Adrenal gland (tissue), 19 donors: ENCODE measurements at regions of chr1 and their contacts with region 1.

Region 1: GRCh38 chr1:56578963-56579875 is at the start of gene PLPP3:
- DNase-seq: peak; percentile 80 to 92 (median 89)
- H3K4me3 ChIP-seq: peak within 1 kb of the TSS; percentile 64 to 99 (median 83)
- H3K27ac ChIP-seq: peak within 1 kb of the TSS; percentile 35 to 93 (median 91)
- H3K4me1 ChIP-seq: peaks cover 10 to 29% of the 10 kb centered on the region in 2 donors
- H3K27me3 ChIP-seq: no peaks in the 10 kb centered on the region
- CTCF ChIP-seq: peak; percentile 24 to 80 (median 51)
- POLR2A ChIP-seq: peak; percentile 87 to 94
- total RNA-seq, gene PLPP3: 57.3 to 156 (median 100) TPM

Region 2: DNA sequence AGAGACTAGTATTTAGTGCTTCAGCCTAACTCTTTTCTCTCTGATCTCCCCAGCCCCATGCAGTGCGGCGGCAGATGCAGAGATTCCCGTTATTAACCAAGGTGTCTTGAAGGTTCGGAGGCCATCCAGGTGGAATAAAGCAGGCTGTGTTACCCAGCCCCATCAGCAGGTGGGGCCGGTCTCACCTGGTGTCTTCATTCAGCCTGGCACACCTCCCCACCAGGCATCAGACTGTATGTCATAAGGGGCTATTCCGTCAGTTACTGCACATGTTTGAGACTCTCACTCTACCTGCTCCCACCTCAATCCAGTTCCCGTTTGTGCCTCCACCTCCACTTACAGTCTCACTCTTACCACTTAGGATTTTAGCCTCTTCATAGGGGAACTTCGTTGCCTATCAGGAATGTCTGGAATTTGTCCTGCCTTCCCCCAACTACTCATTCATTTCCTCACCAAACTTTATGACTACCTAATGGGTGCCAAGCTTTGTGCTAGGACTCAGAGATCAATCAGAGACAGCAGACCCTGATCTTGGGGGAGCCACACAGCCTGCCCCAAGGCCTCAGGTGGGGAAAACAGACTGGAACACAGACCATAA is 170.0 kb before region 1 on chr1:
- intact Hi-C with region 1: loop called in 1 of 2 experiments (anchors 5 kb)
- DNase-seq: peak in 1 of 7 donors; percentile 19
- H3K4me3 ChIP-seq: no peak overlapping the region
- H3K27ac ChIP-seq: no peak overlapping the region
- H3K4me1 ChIP-seq: no peaks in the 10 kb centered on the region
- H3K27me3 ChIP-seq: no peaks in the 10 kb centered on the region
- CTCF ChIP-seq: peak in 3 of 6 experiments; percentile 26 to 33 (median 30)
- POLR2A ChIP-seq: no peak

Region 3: GRCh38 chr1:56516539-56517252 is 62.5 kb before region 1 on chr1:
- intact Hi-C with region 1: no loop called
- DNase-seq: no peak
- H3K4me3 ChIP-seq: no peak overlapping the region
- H3K27ac ChIP-seq: peak overlapping the region in 1 of 5 donors; percentile 19
- H3K4me1 ChIP-seq: peaks cover 3% of the 10 kb centered on the region in 2 donors
- H3K27me3 ChIP-seq: no peaks in the 10 kb centered on the region
- CTCF ChIP-seq: no peak
- POLR2A ChIP-seq: no peak

Region 4: DNA sequence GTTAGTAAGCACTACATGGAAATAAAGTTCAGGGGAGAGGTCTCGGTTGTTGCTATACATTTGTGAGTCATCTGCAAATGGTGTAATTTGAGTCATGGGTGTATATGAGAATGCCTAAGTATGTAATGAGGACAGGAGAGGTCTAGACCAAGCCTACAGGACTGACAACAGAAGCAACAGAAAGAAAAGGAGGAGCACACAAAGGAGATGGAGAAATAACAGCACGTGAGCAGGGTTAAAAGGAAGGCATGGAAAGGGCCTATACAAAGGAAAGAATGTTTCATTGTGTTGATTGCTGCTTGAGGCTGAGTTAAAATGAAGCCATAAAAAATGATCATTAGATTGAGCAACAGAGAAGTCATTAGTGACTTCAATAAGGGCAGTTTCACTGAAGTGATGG is 37.9 kb after region 1 on chr1:
- intact Hi-C with region 1: no loop called
- DNase-seq: no peak
- H3K4me3 ChIP-seq: no peak overlapping the region
- H3K27ac ChIP-seq: no peak overlapping the region
- H3K4me1 ChIP-seq: no peaks in the 10 kb centered on the region
- H3K27me3 ChIP-seq: no peaks in the 10 kb centered on the region
- CTCF ChIP-seq: no peak
- POLR2A ChIP-seq: no peak